Uterus (tissue), 4 donors: ENCODE measurements at regions of chr1 and their contacts with region 1.

Region 1: GRCh38 chr1:8374812-8375211 is 56.9 kb downstream of the SLC45A1 start:
- DNase-seq: peak in 1 of 2 donors; percentile 21
- H3K4me3 ChIP-seq: no peak overlapping the region
- H3K27ac ChIP-seq: peak overlapping the region; percentile 85 to 92
- H3K4me1 ChIP-seq: peaks cover 20 to 43% of the 10 kb centered on the region in 2 donors
- H3K27me3 ChIP-seq: no peaks in the 10 kb centered on the region
- CTCF ChIP-seq: no peak
- POLR2A ChIP-seq: no peak

Region 2: GRCh38 chr1:8015036-8015808 is 359.6 kb before region 1 on chr1:
- intact Hi-C with region 1: no loop called
- DNase-seq: peak; percentile 44 to 74
- H3K4me3 ChIP-seq: no peak overlapping the region
- H3K27ac ChIP-seq: peak overlapping the region; percentile 71 to 77
- H3K4me1 ChIP-seq: peaks cover 0 to 8% of the 10 kb centered on the region in 2 donors
- H3K27me3 ChIP-seq: no peaks in the 10 kb centered on the region
- CTCF ChIP-seq: peak; percentile 70 to 91 (median 75)
- POLR2A ChIP-seq: no peak

Region 3: GRCh38 chr1:8314346-8315280 is 60.2 kb before region 1 on chr1:
- intact Hi-C with region 1: no loop called
- DNase-seq: peak; percentile 79 to 83
- H3K4me3 ChIP-seq: no peak overlapping the region
- H3K27ac ChIP-seq: no peak overlapping the region
- H3K4me1 ChIP-seq: no peaks in the 10 kb centered on the region
- H3K27me3 ChIP-seq: no peaks in the 10 kb centered on the region
- CTCF ChIP-seq: peak; percentile 83 to 97 (median 92)
- POLR2A ChIP-seq: no peak

Region 4: GRCh38 chr1:8423650-8424538 is 49.1 kb after region 1 on chr1:
- intact Hi-C with region 1: loop called (anchors 10 kb)
- DNase-seq: peak; percentile 61 to 62
- H3K4me3 ChIP-seq: peak overlapping the region; percentile 85 to 98
- H3K27ac ChIP-seq: peak overlapping the region; percentile 99 to 100
- H3K4me1 ChIP-seq: peaks cover 0 to 10% of the 10 kb centered on the region in 2 donors
- H3K27me3 ChIP-seq: no peaks in the 10 kb centered on the region
- CTCF ChIP-seq: peak in 1 of 4 experiments; percentile 29
- POLR2A ChIP-seq: peak; percentile 52 to 64